Activated naive CD4-positive, alpha-beta T cell treated with anti-CD3 and anti-CD28 coated beads for 36 hours (primary cell): ENCODE measurements at regions of chr2 and their contacts with region 1.

Region 1: GRCh38 chr2:239882331-239882732 is 142.8 kb downstream of the NDUFA10 start:
- DNase-seq: peak; percentile 77
- H3K4me3 Mint-ChIP-seq: no peak overlapping the region
- H3K27ac Mint-ChIP-seq: no peak overlapping the region
- H3K4me1 Mint-ChIP-seq: peaks cover 3% of the 10 kb centered on the region
- H3K27me3 Mint-ChIP-seq: peaks cover 7% of the 10 kb centered on the region

Region 2: GRCh38 chr2:239991689-239992314 is 109.5 kb after region 1 on chr2:
- CTCF ChIA-PET with region 1: no interaction called
- intact Hi-C with region 1: loop called (anchors 5 kb)
- DNase-seq: peak; percentile 22
- H3K4me3 Mint-ChIP-seq: no peak overlapping the region
- H3K27ac Mint-ChIP-seq: no peak overlapping the region
- H3K4me1 Mint-ChIP-seq: no peaks in the 10 kb centered on the region
- H3K27me3 Mint-ChIP-seq: no peaks in the 10 kb centered on the region

Region 3: DNA sequence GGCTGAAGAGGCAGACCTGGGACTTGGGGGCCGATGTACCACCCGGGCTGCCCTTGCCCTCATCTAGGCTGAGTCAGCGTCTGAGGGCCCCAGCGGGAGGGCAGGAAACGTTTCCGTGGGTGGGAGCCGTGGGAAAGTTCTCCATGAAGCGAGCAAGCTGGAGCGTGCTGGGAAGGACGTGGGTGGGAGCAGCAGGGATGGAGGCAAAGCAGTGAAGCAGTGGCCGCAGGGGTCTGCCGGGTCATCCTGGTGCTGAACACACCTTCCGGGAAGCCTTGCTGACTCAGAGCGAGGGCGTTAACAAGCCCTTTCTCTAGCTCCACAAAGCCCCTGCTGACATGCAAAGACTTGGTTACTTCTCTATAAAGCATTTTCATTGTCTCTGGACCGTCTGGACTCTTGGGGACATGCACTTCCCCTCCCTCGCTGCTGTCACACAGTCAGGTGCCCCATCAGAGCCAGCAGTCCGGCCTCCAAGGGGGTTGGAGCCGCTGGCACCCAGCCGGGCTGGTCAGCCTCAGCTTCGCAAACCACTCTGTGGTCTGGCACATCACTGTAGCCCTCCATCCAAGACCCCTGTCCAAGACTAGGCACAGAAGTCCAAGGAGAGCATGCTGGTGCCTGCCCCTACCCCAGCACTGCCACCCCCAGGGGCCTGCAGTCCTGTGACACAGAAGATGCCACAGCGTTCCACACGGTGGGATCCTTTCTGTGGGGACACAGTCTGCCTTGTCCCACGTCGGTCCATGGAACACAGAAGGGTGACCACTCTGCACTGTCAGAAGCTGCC is 438.1 kb after region 1 on chr2:
- CTCF ChIA-PET with region 1: no interaction called
- intact Hi-C with region 1: no loop called
- DNase-seq: no peak
- H3K4me3 Mint-ChIP-seq: no peak overlapping the region
- H3K27ac Mint-ChIP-seq: no peak overlapping the region
- H3K4me1 Mint-ChIP-seq: no peaks in the 10 kb centered on the region
- H3K27me3 Mint-ChIP-seq: peaks cover 6% of the 10 kb centered on the region